ENCODE measurements at regions of chr3 and their contacts with region 1.

Region 1: GRCh38 chr3:185042312-185043050 is 110.4 kb downstream of the C3orf70 start:
- DNase-seq: no peak
- H3K4me3 ChIP-seq: no peak overlapping the region
- CTCF ChIP-seq: no peak

Region 2: DNA sequence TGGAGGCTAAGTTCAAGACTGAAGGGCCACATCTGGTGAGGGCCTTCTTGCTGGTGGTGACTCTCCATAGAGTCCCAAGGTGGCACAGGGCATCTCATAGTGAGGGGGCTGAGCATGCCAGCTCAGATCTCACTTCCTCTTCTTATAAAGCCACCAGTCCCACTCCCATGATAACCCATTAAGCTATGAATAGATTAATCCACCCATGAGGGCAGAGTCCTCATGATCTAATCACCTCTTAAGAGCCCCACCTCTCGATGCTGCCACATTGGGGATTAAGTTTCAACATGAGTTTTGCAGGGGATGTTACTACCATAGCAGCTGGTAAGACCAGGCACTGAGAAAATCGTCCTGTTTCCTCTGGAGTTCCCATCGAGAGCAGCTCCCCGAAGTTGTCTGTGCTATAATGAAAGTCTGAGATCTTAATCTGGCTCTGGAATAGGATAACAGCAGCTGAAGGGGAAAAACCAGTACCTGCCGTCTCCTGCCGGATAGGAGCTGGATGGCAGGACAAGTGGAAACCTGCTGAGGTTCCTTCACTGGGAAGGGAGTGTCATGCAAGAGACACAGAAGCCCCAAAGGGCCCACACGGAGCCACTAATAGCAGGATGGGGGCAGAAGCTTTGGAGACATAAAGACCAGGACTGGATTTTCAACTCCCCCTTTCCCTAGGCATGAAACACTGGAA is 560.4 kb before region 1 on chr3:
- in situ Hi-C with region 1: no loop called
- DNase-seq: no peak
- H3K4me3 ChIP-seq: no peak overlapping the region
- CTCF ChIP-seq: no peak

Region 3: GRCh38 chr3:185076219-185076618 is 33.7 kb after region 1 on chr3:
- in situ Hi-C with region 1: loop called (anchors 5 kb)
- DNase-seq: no peak
- H3K4me3 ChIP-seq: no peak overlapping the region
- CTCF ChIP-seq: no peak